ENCODE measurements at regions of chr11 and their contacts with region 1.

Region 1: DNA sequence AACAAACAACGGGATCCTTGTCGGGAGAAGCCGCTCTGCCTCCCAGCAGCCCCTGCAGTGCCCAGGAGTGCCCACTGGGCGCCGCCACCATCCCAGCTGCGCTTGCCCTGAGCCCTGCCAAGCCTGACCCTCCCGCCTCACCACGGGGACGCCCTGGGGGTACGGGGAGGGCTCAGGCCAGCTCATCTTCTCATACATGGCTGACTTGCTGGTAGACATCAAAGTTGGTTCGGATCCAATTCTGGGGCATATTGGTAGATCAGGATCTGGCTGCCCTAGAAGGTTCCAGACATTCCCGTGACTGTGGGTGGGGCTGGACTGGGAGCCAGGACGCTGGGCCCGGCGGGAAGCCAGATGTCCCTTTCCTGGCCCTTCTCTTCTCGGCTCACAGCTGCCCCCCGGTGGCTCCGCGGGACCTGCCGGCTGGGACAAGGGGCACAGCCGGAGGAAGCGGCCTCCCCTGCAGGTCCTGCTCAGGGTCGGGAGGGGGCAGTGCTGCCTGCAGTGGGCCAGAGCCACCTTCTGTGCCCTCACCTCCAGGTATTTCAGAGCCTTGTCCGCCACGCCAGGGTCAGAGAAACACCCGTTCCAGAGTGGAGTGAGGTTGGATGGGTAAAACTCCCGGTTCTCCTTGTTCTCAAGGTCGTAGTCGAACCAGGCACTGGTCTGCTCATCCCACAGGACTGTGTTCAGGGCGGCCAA is 10.6 kb upstream of the TREH start:
- DNase-seq: peak; percentile 95
- ATAC-seq: peak; percentile 95
- H3K4me3 Mint-ChIP-seq: peak overlapping the region; percentile 65
- H3K27ac Mint-ChIP-seq: peak overlapping the region; percentile 84
- H3K4me1 Mint-ChIP-seq: peaks cover 46% of the 10 kb centered on the region
- H3K27me3 Mint-ChIP-seq: no peaks in the 10 kb centered on the region

Region 2: DNA sequence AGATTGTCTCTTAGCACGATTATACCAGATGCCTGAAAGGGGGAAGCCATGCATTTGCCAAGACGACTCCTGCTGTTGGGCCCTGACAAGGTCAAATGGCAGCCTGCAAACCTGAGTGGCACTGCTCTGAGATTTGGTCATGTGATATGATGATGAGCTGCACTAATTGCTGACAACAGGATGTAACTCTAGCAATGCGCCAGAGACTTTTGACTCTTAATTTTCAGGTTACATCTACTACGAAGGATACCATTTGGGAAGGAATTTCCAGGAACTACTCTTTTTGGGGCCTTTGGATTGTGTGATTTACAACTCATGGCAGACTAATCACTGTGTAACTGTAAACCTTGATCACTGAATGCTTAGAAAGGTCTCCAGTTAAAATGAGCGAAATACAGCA is 23.6 kb before region 1 on chr11:
- CTCF ChIA-PET with region 1: interaction called, 10 read pairs
- POLR2A ChIA-PET with region 1: no interaction called
- intact Hi-C with region 1: no loop called
- DNase-seq: no peak
- ATAC-seq: no peak
- H3K4me3 Mint-ChIP-seq: no peak overlapping the region
- H3K27ac Mint-ChIP-seq: no peak overlapping the region
- H3K4me1 Mint-ChIP-seq: peaks cover 5% of the 10 kb centered on the region
- H3K27me3 Mint-ChIP-seq: peaks cover 6% of the 10 kb centered on the region

Region 3: DNA sequence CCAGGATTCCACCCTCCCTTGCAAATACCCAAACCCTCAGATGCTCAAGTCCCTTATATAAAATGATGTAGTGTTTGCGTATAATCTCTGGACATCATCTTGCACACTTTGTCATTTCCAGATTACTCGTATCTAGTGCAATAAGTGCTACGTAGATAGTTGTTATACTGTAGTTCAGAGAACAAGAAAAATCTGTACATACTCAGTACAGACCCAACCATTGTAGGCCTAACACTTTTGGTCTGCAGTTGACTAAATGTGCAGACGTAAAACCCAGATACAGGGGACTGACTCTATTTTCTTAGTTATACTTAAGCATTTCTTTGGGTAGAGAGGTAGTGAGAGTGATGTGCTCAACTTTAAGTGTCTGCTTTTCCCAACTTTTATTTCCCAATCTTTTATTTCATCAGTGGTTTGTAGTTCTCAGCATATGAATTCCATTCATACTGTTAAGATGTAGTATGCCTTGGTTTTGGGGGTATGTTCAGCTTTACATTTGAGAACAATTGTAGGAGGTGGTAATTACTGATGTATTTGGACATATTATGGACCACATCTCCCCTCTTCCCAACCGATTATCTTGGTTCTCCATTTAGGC is 57.1 kb after region 1 on chr11:
- CTCF ChIA-PET with region 1: interaction called, 6 read pairs
- POLR2A ChIA-PET with region 1: no interaction called
- intact Hi-C with region 1: loop called (anchors 5 kb)
- DNase-seq: no peak
- ATAC-seq: peak; percentile 40
- H3K4me3 Mint-ChIP-seq: no peak overlapping the region
- H3K27ac Mint-ChIP-seq: no peak overlapping the region
- H3K4me1 Mint-ChIP-seq: peaks cover 7% of the 10 kb centered on the region
- H3K27me3 Mint-ChIP-seq: no peaks in the 10 kb centered on the region

Region 4: DNA sequence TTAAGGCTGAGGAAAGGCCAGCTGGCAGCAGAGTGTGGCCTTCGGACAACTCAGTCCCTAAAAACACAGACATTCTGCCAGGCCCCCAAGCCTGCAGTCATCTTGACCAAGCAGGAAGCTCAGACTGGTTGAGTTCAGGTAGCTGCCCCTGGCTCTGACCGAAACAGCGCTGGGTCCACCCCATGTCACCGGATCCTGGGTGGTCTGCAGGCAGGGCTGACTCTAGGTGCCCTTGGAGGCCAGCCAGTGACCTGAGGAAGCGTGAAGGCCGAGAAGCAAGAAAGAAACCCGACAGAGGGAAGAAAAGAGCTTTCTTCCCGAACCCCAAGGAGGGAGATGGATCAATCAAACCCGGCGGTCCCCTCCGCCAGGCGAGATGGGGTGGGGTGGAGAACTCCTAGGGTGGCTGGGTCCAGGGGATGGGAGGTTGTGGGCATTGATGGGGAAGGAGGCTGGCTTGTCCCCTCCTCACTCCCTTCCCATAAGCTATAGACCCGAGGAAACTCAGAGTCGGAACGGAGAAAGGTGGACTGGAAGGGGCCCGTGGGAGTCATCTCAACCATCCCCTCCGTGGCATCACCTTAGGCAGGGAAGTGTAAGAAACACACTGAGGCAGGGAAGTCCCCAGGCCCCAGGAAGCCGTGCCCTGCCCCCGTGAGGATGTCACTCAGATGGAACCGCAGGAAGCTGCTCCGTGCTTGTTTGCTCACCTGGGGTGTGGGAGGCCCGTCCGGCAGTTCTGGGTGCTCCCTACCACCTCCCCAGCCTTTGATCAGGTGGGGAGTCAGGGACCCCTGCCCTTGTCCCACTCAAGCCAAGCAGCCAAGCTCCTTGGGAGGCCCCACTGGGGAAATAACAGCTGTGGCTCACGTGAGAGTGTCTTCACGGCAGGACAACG is 205.4 kb after region 1 on chr11:
- CTCF ChIA-PET with region 1: interaction called, 10 read pairs
- POLR2A ChIA-PET with region 1: interaction called, 3 read pairs
- intact Hi-C with region 1: no loop called
- DNase-seq: peak; percentile 88
- ATAC-seq: peak; percentile 86
- H3K4me3 Mint-ChIP-seq: peak overlapping the region; percentile 52
- H3K27ac Mint-ChIP-seq: peak overlapping the region; percentile 92
- H3K4me1 Mint-ChIP-seq: peaks cover 72% of the 10 kb centered on the region
- H3K27me3 Mint-ChIP-seq: no peaks in the 10 kb centered on the region

Region 5: GRCh38 chr11:118956094-118956846 is 266.3 kb after region 1 on chr11 and contains the start of gene UPK2:
- CTCF ChIA-PET with region 1: interaction called, 7 read pairs
- POLR2A ChIA-PET with region 1: no interaction called
- intact Hi-C with region 1: loop called (anchors 1 kb)
- DNase-seq: peak; percentile 95
- ATAC-seq: peak; percentile 100
- H3K4me3 Mint-ChIP-seq: no peak within 1 kb of the TSS
- H3K27ac Mint-ChIP-seq: peak within 1 kb of the TSS; percentile 0
- H3K4me1 Mint-ChIP-seq: peaks cover 5% of the 10 kb centered on the region
- H3K27me3 Mint-ChIP-seq: no peaks in the 10 kb centered on the region
- total RNA-seq, gene UPK2: 0.19 to 0.32 TPM

Region 6: GRCh38 chr11:120546312-120547205 is 1856.6 kb after region 1 on chr11:
- CTCF ChIA-PET with region 1: no interaction called
- POLR2A ChIA-PET with region 1: no interaction called
- intact Hi-C with region 1: no loop called
- DNase-seq: no peak
- ATAC-seq: no peak
- H3K4me3 Mint-ChIP-seq: no peak overlapping the region
- H3K27ac Mint-ChIP-seq: no peak overlapping the region
- H3K4me1 Mint-ChIP-seq: no peaks in the 10 kb centered on the region
- H3K27me3 Mint-ChIP-seq: peaks cover 16% of the 10 kb centered on the region

Measured in activated CD4-positive, alpha-beta T cell treated with anti-CD3 and anti-CD28 coated beads for 36 hours (primary cell).